HAP-1 (cell line): ENCODE measurements at regions of chr9 and their contacts with region 1.

Region 1: GRCh38 chr9:121399883-121400607 is 30.0 kb upstream of the STOM start:
- DNase-seq: peak in 1 of 2 experiments; percentile 70
- H3K4me3 ChIP-seq: no peak overlapping the region
- H3K4me1 ChIP-seq: no peaks in the 10 kb centered on the region
- H3K27me3 ChIP-seq: no peaks in the 10 kb centered on the region

Region 2: DNA sequence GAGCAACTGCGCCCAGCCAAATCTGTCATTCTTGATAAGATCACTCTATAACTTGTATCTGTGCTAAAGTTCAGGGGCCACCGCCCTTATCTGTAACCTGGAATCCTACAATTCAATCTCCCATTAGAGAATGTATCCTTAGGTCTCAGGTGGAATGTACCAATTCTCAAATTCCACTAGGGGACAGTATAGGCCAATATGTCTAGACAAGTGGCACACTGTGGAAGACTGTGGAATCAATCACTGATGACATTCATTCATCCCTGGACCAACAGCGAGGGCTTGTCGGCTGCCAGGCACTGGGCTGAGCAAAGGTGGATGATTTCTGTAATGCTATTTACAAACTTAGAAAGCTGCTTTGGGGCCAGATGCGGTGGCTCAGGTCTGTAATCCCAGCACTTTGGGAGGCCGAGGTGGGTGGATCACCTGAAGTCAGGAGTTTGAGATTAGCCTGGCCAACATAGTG is 657.1 kb before region 1 on chr9:
- in situ Hi-C with region 1: loop called (anchors 25 kb)
- DNase-seq: peak; percentile 35 to 65
- H3K4me3 ChIP-seq: no peak overlapping the region
- H3K4me1 ChIP-seq: no peaks in the 10 kb centered on the region
- H3K27me3 ChIP-seq: no peaks in the 10 kb centered on the region

Region 3: DNA sequence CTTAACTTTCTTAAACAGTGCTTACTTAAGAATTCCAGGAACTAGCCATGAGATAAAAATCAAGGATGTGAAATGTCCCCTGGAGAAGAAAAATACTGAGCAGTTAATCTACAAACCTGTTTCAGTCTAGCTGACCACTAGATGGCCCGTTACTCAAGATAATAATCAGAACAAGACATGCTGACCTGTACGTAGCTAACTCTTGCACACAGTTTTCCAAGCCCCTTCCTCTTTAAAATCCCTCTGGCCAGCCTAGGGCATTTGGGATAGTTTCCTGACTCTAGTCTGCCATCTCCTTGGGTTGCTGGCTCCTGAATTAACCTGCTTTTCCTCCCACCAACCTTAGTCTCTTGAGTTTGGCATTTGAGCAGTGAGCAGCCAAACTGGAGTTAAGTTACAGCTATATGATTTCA is 414.2 kb before region 1 on chr9:
- in situ Hi-C with region 1: loop called (anchors 10 kb)
- DNase-seq: peak; percentile 25 to 48
- H3K4me3 ChIP-seq: no peak overlapping the region
- H3K4me1 ChIP-seq: no peaks in the 10 kb centered on the region
- H3K27me3 ChIP-seq: peaks cover 4% of the 10 kb centered on the region; the same call in 1 of the 2 replicates

Region 4: GRCh38 chr9:121213136-121213806 is 186.8 kb before region 1 on chr9:
- in situ Hi-C with region 1: loop called (anchors 5 kb)
- DNase-seq: peak; percentile 86 to 93
- H3K4me3 ChIP-seq: no peak overlapping the region
- H3K4me1 ChIP-seq: peaks cover 3% of the 10 kb centered on the region; the same call in 1 of the 2 replicates
- H3K27me3 ChIP-seq: no peaks in the 10 kb centered on the region

Region 5: DNA sequence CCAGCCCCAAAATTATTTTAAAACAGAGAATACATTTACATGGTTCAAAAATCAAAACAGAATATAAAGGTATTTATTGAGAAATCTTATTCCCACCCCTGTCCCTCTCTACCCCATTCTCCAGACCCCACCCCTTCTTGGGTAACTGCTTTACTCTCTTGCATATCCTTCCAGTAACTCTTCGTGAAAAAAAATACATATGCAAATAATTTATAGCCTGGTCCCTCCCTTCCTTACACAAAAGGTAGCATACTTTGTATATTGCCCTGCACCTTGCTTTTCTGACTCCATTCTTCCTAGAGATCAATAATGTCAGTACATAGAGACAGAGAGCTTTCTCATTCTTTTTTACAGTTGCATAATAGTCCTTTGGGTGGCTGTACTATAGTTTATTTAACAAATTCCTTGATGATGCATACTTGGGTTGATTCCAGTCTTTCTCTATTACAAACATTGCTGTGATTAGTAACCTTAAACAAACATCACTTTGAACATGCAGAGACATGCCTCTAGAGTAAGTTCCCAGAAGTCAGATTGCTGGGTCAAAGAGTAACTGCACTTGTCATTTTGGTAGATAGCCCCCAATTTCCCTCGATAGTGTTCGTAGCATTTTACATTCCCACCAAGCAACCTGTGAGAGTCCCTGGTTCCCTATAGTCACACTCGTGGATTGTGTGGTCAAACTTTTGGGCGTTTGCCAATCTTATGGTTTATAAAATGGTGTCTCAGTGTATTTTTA is 77.8 kb before region 1 on chr9:
- in situ Hi-C with region 1: loop called (anchors 5 kb)
- DNase-seq: peak in 1 of 2 experiments; percentile 3
- H3K4me3 ChIP-seq: no peak overlapping the region
- H3K4me1 ChIP-seq: no peaks in the 10 kb centered on the region
- H3K27me3 ChIP-seq: no peaks in the 10 kb centered on the region